PC-9 (cell line): ENCODE measurements at regions of chr7 and their contacts with region 1.

Region 1: DNA sequence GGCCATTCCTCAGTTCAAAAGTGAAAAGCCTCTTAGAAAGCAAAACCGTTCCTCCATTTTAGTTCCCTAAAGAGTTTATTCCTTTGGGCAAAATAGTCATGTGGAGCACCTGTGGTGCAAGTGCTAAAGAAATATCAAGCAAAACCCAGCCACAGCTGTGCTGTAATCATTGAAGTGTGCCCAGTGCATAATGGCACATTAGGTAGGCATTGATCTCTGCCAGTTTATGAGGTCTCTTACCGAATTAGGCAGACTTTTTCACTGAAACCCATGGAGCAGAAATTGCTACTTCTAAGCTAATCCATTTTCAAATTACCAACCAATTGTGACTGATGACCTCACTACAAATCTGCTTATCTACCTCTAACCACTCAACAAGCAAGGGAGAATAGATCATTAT is 97.2 kb upstream of the SEMA3A start:
- DNase-seq: no peak
- H3K4me3 ChIP-seq: no peak overlapping the region
- H3K27ac ChIP-seq: no peak overlapping the region
- H3K4me1 ChIP-seq: no peaks in the 10 kb centered on the region
- H3K27me3 ChIP-seq: no peaks in the 10 kb centered on the region
- CTCF ChIP-seq: no peak

Region 2: GRCh38 chr7:84248267-84248666 is 43.5 kb before region 1 on chr7:
- CTCF ChIA-PET with region 1: no interaction called
- POLR2A ChIA-PET with region 1: no interaction called
- intact Hi-C with region 1: loop called (anchors 1 kb)
- DNase-seq: no peak
- H3K4me3 ChIP-seq: no peak overlapping the region
- H3K27ac ChIP-seq: no peak overlapping the region
- H3K4me1 ChIP-seq: no peaks in the 10 kb centered on the region
- H3K27me3 ChIP-seq: no peaks in the 10 kb centered on the region
- CTCF ChIP-seq: no peak

Region 3: GRCh38 chr7:84336303-84336702 is 44.5 kb after region 1 on chr7:
- CTCF ChIA-PET with region 1: no interaction called
- POLR2A ChIA-PET with region 1: no interaction called
- intact Hi-C with region 1: no loop called
- DNase-seq: no peak
- H3K4me3 ChIP-seq: no peak overlapping the region
- H3K27ac ChIP-seq: no peak overlapping the region
- H3K4me1 ChIP-seq: no peaks in the 10 kb centered on the region
- H3K27me3 ChIP-seq: no peaks in the 10 kb centered on the region
- CTCF ChIP-seq: no peak